IMR-90 (cell line): ENCODE measurements at regions of chr1 and their contacts with region 1.

Region 1: DNA sequence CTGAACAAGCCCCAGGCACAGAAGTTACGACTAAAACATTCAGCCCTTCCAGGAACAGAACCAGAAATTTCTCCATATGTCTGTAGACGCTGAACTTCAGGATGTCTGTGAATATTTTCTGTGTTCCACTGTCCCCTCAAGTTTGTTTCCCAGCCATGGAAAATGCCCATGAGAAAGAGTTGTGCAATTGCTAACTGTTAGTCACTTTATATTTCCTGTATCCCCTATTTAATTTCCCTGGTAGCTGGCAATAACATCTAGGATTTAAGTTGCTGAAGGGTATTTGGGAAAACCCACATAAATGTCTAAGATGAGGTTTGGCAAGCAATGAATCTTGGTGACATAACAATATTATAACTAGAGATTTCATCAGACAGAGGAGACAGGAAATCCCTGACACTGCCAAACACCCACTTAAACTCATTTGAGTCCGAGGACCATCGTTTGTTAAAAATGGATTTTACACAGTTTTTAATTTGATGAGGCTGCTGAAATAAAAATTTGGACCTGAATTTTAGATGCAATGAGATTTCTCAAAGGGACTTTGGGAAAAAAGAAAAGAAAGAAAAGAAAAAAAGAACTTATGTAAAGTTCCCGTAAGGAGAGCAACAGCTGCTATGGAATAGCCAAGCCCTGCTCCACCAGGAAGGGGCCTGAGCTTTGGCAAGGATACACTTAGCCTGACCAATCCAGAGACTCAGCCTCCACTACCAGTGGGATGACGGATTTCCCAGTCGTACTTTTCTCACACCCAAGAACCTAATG is 21.8 kb upstream of the ERRFI1 start:
- DNase-seq: peak; percentile 80
- ATAC-seq: peak; percentile 77
- H3K4me3 ChIP-seq: no peak overlapping the region
- H3K27ac ChIP-seq: peak overlapping the region; percentile 72
- H3K4me1 ChIP-seq: peaks cover 12% of the 10 kb centered on the region
- H3K27me3 ChIP-seq: no peaks in the 10 kb centered on the region
- CTCF ChIP-seq: no peak
- POLR2A ChIP-seq: no peak
- RAD21 ChIP-seq: no peak

Region 2: DNA sequence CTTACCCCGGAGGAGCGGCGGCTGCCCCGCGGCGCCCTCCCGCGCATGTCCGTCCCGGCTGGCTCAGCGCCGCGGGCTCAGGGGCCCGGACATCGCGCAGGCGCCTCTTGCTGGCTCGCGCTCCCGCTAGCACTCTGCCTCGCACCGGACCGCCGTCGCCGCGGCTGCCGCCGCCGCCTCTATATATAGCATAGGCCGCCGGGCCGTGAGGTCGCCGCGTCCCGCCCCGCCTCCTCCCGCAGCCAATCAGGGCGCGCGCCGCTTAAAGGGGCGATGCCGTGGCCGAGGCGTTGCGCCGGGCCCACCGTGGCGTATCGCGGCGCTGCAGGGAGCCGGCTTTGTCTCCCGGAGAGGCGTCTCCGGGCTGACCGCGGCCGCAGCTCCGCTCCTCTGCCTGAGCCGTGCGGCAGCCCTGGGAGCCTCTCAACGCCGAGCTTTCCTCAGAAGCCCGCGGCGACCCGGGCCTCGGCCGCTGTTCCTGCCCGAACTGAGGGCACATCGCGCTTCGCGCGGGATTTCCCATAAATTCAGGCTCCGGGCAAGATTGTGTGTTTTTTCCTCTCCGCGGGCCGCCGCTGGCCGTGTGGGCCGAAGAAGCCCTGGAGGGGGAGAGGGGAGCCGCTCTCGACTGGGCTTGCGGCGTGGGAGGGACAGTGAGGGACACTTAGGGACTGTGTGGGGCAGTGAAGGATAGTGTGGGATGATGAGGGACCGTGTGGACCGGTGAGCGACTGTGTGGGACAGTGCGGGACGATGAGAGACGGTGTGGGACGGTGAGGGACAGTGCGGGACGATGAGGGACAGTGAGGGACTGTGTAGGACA is 21.5 kb before region 1 on chr1 and contains the start of gene ERRFI1:
- CTCF ChIA-PET with region 1: no interaction called
- POLR2A ChIA-PET with region 1: no interaction called
- dilution Hi-C with region 1: no loop called
- in situ Hi-C with region 1: no loop called
- intact Hi-C with region 1: no loop called
- DNase-seq: peak; percentile 93
- ATAC-seq: peak; percentile 81
- H3K4me3 ChIP-seq: peak within 1 kb of the TSS; percentile 66
- H3K27ac ChIP-seq: peak within 1 kb of the TSS; percentile 95
- H3K4me1 ChIP-seq: peaks cover 15% of the 10 kb centered on the region
- H3K27me3 ChIP-seq: no peaks in the 10 kb centered on the region
- CTCF ChIP-seq: no peak
- POLR2A ChIP-seq: peak; percentile 100
- RAD21 ChIP-seq: peak; percentile 20; the same call in 1 of the 2 replicates
- total RNA-seq, gene ERRFI1: 101 and 106 TPM in 2 replicates

Region 3: DNA sequence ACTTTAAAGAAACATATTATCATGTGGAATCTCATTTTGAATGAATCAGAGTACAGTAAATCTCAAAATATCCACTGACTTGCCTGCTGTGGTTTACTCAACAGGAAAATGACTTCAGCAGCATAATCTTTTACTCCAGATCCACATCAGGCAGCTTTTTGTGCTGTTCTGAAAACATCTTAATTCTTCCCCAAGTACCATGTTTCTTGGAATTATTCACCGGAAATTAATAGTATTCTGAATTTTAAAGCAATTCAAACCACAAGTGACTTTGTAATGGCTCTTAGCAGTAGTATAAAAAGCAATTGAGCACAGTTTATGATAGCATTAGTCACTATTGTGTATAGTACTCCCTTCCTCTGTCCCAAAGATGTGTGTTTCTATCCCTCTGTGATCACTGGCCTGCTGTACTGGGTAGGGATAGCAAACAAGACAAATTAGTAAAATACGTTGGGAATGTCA is 42.4 kb after region 1 on chr1:
- CTCF ChIA-PET with region 1: interaction called, 4 read pairs
- POLR2A ChIA-PET with region 1: no interaction called
- dilution Hi-C with region 1: no loop called
- in situ Hi-C with region 1: no loop called
- intact Hi-C with region 1: loop called (anchors 5 kb)
- DNase-seq: peak; percentile 98
- ATAC-seq: peak; percentile 80
- H3K4me3 ChIP-seq: no peak overlapping the region
- H3K27ac ChIP-seq: peak overlapping the region; percentile 84
- H3K4me1 ChIP-seq: peaks cover 28% of the 10 kb centered on the region
- H3K27me3 ChIP-seq: no peaks in the 10 kb centered on the region
- CTCF ChIP-seq: no peak
- POLR2A ChIP-seq: no peak; the same call in 1 of the 2 replicates
- RAD21 ChIP-seq: peak; percentile 21; the same call in 1 of the 2 replicates